WTC11 (cell line): ENCODE measurements at regions of chr1 and their contacts with region 1.

Region 1: GRCh38 chr1:202861420-202862200 is 27.3 kb downstream of the RABIF start:
- DNase-seq: peak; percentile 94
- ATAC-seq: peak; percentile 89
- H3K4me3 Mint-ChIP-seq: peak overlapping the region; percentile 88
- H3K27ac Mint-ChIP-seq: peak overlapping the region; percentile 96
- H3K4me1 Mint-ChIP-seq: peaks cover 19% of the 10 kb centered on the region
- H3K27me3 Mint-ChIP-seq: no peaks in the 10 kb centered on the region
- CTCF ChIP-seq: no peak

Region 2: GRCh38 chr1:202810615-202811295 is 50.9 kb before region 1 on chr1 and contains the start of gene PCAT6:
- CTCF ChIA-PET with region 1: interaction called, 4 read pairs
- POLR2A ChIA-PET with region 1: interaction called, 32 read pairs
- DNase-seq: peak; percentile 98
- ATAC-seq: peak; percentile 82
- H3K4me3 Mint-ChIP-seq: peak within 1 kb of the TSS; percentile 80
- H3K27ac Mint-ChIP-seq: peak within 1 kb of the TSS; percentile 98
- H3K4me1 Mint-ChIP-seq: peaks cover 40% of the 10 kb centered on the region
- H3K27me3 Mint-ChIP-seq: peaks cover 7% of the 10 kb centered on the region
- CTCF ChIP-seq: no peak
- total RNA-seq, gene PCAT6: 11.2 to 13.2 TPM (median 11.7 TPM) in 3 replicates

Region 3: GRCh38 chr1:203006948-203007871 is 145.6 kb after region 1 on chr1 and contains the start of gene TMEM183A:
- CTCF ChIA-PET with region 1: interaction called, 3 read pairs
- POLR2A ChIA-PET with region 1: interaction called, 10 read pairs
- DNase-seq: peak; percentile 98
- ATAC-seq: peak; percentile 91
- H3K4me3 Mint-ChIP-seq: peak within 1 kb of the TSS; percentile 96
- H3K27ac Mint-ChIP-seq: peak within 1 kb of the TSS; percentile 100
- H3K4me1 Mint-ChIP-seq: peaks cover 23% of the 10 kb centered on the region
- H3K27me3 Mint-ChIP-seq: no peaks in the 10 kb centered on the region
- CTCF ChIP-seq: no peak
- total RNA-seq, gene TMEM183A: 97.4 to 108 TPM (median 99.8 TPM) in 3 replicates